Heart right ventricle (tissue), 16 donors: ENCODE measurements at regions of chr1 and their contacts with region 1.

Region 1: GRCh38 chr1:106705971-106706370 is 350.5 kb upstream of the PRMT6 start:
- DNase-seq: no peak
- ATAC-seq: no peak
- H3K4me3 ChIP-seq: no peak overlapping the region
- H3K27ac ChIP-seq: no peak overlapping the region
- H3K4me1 ChIP-seq: no peaks in the 10 kb centered on the region
- H3K27me3 ChIP-seq: no peaks in the 10 kb centered on the region
- CTCF ChIP-seq: no peak

Region 2: DNA sequence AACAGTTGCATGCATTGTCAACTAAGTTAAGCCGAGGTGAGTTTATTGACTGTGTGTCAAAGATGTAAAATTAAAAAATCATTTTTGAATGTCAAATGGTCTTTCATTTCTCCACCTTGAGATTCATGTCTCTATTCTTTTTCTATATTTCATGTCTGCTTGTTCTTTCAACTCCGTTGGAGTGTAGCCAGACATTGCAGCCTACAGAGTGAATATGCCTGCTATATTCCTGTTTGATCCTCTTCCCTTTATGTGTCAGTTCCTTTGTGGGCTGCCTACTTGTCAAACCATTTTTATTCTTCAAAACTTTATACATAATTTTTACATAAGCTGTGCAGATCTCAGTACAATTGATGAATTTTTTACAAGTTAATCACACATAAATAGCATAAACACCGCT is 975.3 kb before region 1 on chr1:
- intact Hi-C with region 1: loop called in 1 of 10 experiments (anchors 5 kb)
- DNase-seq: no peak
- ATAC-seq: no peak
- H3K4me3 ChIP-seq: no peak overlapping the region
- H3K27ac ChIP-seq: no peak overlapping the region
- H3K4me1 ChIP-seq: no peaks in the 10 kb centered on the region
- H3K27me3 ChIP-seq: no peaks in the 10 kb centered on the region
- CTCF ChIP-seq: no peak